ENCODE measurements at regions of chr2 and their contacts with region 1.

Region 1: DNA sequence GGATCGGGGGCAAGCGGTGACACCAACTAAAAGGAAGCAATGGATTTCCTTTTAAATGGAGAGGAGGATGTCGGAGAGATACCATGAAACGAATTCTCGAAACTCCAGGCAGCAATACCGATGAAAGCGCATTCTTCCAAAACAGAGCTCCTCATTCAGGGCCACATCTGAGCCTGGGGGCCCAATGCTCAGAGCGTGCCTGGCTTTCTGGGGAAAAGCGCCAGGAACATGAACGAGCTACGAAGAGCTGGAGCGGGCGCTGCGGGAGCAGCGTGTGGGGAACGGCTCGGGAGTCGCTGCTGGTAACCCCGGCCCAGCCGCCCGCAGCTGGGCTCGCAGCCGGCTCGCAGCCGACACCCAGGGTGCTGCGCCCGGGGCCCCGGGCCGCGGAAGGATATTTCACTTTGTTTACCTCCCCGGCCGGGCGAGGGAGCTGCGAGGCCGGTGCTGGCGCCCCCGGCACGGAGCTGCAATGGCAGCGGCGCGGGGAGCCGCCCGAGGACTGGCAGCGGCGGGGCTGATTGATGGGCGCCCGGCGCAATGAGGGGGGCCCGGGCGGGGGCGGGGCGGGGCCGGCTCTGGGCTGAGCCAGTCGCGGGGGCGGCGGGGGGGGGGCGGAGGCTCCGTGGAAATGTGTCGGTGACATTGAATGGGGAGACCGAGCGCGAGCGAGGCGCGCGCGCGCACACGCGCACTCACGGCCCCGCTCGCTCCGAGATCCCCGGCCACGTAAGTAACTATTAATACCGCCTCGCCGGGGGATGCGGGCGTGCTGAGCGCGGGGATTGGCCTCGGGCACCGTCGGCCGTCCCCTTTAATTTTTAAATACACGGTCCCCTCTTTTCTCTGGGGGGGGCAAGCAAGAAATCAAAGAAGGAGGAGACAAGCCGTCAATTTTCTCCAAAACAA is at the start of gene TRIB2:
- DNase-seq: peak; percentile 96
- H3K4me3 Mint-ChIP-seq: peak within 1 kb of the TSS; percentile 92
- H3K27ac Mint-ChIP-seq: peak within 1 kb of the TSS; percentile 90
- H3K4me1 Mint-ChIP-seq: peaks cover 54% of the 10 kb centered on the region
- H3K27me3 Mint-ChIP-seq: peaks cover 5% of the 10 kb centered on the region
- total RNA-seq, gene TRIB2: 4.0 and 5.1 TPM in 2 replicates

Region 2: DNA sequence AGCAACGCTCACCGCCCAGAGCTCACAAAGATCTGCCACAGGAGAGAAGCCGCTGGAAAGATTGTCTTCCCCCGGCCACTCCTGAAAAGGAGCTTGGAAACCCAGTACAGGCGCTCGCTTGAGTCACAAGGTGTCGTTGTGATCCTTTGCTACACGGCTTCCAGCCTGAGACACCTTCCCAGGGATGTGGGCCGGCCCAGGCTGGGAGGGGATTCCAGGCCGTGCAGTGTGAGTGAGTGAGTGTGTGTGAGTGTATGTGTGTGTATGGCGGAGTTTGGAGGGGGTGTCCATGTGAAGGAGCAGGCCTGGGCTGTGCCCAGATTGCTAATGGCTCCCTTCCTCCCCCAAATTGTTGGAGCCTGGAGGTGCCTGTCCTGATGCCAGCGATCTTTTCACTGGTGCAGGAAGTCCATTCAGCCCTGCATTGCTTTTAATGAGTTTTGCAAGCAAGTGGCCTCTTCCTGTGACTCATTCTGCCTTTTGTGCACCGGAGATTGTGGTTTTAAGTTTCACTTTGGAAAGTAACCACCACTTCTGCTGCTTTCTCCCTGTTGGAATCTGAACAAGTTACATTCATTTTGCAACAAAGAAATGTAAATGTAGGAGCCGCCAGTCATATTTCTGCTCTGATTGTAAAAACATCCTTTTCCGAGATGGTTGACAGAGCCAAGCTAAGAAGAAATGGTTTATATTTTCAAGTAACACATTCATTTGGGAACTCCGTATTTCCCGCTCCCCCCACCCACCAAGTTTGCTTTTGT is 886.4 kb before region 1 on chr2:
- intact Hi-C with region 1: loop called (anchors 2 kb)
- DNase-seq: peak; percentile 89
- H3K4me3 Mint-ChIP-seq: peak overlapping the region; percentile 73
- H3K27ac Mint-ChIP-seq: peak overlapping the region; percentile 85
- H3K4me1 Mint-ChIP-seq: peaks cover 37% of the 10 kb centered on the region
- H3K27me3 Mint-ChIP-seq: peaks cover 37% of the 10 kb centered on the region

Region 3: GRCh38 chr2:12127638-12128037 is 588.9 kb before region 1 on chr2:
- intact Hi-C with region 1: loop called (anchors 5 kb)
- DNase-seq: peak; percentile 68
- H3K4me3 Mint-ChIP-seq: peak overlapping the region; percentile 64
- H3K27ac Mint-ChIP-seq: peak overlapping the region; percentile 57
- H3K4me1 Mint-ChIP-seq: peaks cover 7% of the 10 kb centered on the region
- H3K27me3 Mint-ChIP-seq: no peaks in the 10 kb centered on the region

Region 4: DNA sequence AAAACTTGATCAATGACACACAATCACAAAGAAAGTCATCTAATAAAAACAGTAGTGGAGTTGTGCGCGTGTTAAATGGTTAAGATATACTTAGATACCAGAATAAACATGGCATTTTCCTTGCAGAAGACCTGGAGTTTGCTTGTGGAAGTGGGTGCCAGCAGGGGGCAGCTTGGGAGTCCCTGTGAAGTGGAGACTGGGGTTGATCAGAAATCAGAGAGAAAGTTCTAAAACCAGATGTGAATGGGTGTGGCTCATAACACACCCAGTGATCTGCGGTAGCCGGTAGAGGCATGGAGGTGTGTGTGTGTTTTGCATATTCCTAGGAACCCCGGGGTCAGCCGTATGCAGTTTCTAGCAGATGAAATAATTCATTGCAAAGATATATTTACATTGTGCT is 299.9 kb before region 1 on chr2:
- intact Hi-C with region 1: loop called (anchors 1 kb)
- DNase-seq: peak; percentile 86
- H3K4me3 Mint-ChIP-seq: peak overlapping the region; percentile 4
- H3K27ac Mint-ChIP-seq: peak overlapping the region; percentile 25
- H3K4me1 Mint-ChIP-seq: peaks cover 54% of the 10 kb centered on the region
- H3K27me3 Mint-ChIP-seq: no peaks in the 10 kb centered on the region

Region 5: DNA sequence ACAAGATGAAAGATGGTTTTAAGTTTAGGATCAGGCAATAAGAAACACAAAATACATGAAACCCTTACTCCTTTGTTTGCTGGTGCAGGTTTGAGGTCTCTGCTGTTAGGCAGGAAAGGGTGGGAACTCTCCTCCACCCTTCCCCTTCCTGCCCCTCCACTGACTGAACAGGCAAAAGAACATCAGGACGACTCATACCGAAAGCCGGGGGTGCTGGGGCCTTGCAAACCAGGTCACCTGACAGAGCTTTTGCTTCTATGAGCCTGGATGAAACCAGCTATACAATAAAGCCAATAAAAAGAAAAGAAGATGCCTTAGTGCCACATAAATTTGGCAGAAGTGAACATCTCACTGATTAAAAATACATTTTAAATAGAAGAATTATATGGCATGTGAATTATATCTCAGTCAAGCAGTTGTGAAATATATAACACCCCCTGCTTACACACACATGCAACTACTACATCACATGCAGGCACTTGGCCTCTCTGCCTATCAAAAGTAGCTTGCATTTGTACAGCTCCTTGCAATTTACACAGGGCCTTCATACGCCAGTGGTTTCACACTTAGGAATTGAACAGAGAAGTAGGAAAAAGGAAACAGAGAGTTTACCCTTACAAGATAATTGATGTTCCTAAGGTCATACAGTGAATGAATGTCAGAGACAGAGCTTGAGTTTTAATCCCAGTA is 214.9 kb before region 1 on chr2:
- intact Hi-C with region 1: loop called (anchors 2 kb)
- DNase-seq: peak; percentile 94
- H3K4me3 Mint-ChIP-seq: peak overlapping the region; percentile 65
- H3K27ac Mint-ChIP-seq: peak overlapping the region; percentile 84
- H3K4me1 Mint-ChIP-seq: peaks cover 86% of the 10 kb centered on the region
- H3K27me3 Mint-ChIP-seq: no peaks in the 10 kb centered on the region

Region 6: GRCh38 chr2:12694990-12695774 is 21.4 kb before region 1 on chr2:
- intact Hi-C with region 1: no loop called
- DNase-seq: no peak
- H3K4me3 Mint-ChIP-seq: no peak overlapping the region
- H3K27ac Mint-ChIP-seq: no peak overlapping the region
- H3K4me1 Mint-ChIP-seq: peaks cover 2% of the 10 kb centered on the region
- H3K27me3 Mint-ChIP-seq: peaks cover 21% of the 10 kb centered on the region

Region 7: GRCh38 chr2:12856934-12857601 is 140.5 kb after region 1 on chr2:
- intact Hi-C with region 1: loop called (anchors 2 kb)
- DNase-seq: peak; percentile 79
- H3K4me3 Mint-ChIP-seq: no peak overlapping the region
- H3K27ac Mint-ChIP-seq: no peak overlapping the region
- H3K4me1 Mint-ChIP-seq: peaks cover 27% of the 10 kb centered on the region
- H3K27me3 Mint-ChIP-seq: peaks cover 9% of the 10 kb centered on the region

Region 8: GRCh38 chr2:12897181-12897580 is 180.6 kb after region 1 on chr2:
- intact Hi-C with region 1: no loop called
- DNase-seq: peak; percentile 67
- H3K4me3 Mint-ChIP-seq: no peak overlapping the region
- H3K27ac Mint-ChIP-seq: no peak overlapping the region
- H3K4me1 Mint-ChIP-seq: peaks cover 8% of the 10 kb centered on the region
- H3K27me3 Mint-ChIP-seq: peaks cover 12% of the 10 kb centered on the region